Transverse colon (tissue), 4 donors: ENCODE measurements at regions of chr15 and their contacts with region 1.

Region 1: GRCh38 chr15:72199711-72200212 is 2.2 kb upstream of the GRAMD2A start:
- DNase-seq: peak; percentile 88
- H3K4me3 ChIP-seq: no peak overlapping the region
- H3K27ac ChIP-seq: peak overlapping the region in 3 of 4 donors; percentile 27 to 44 (median 43)
- H3K4me1 ChIP-seq: peaks cover 0 to 19% (median 5%) of the 10 kb centered on the region in 4 donors
- H3K27me3 ChIP-seq: peaks cover 31% of the 10 kb centered on the region
- CTCF ChIP-seq: peak; percentile 90 to 94 (median 91)
- EP300 ChIP-seq: no peak
- POLR2A ChIP-seq: no peak

Region 2: GRCh38 chr15:72086920-72087648 is 112.7 kb before region 1 on chr15:
- in situ Hi-C with region 1: no loop called
- intact Hi-C with region 1: no loop called
- DNase-seq: no peak
- H3K4me3 ChIP-seq: no peak overlapping the region
- H3K27ac ChIP-seq: no peak overlapping the region
- H3K4me1 ChIP-seq: peaks cover 0 to 5% (median 0%) of the 10 kb centered on the region in 4 donors
- H3K27me3 ChIP-seq: no peaks in the 10 kb centered on the region
- CTCF ChIP-seq: no peak
- EP300 ChIP-seq: no peak
- POLR2A ChIP-seq: no peak

Region 3: DNA sequence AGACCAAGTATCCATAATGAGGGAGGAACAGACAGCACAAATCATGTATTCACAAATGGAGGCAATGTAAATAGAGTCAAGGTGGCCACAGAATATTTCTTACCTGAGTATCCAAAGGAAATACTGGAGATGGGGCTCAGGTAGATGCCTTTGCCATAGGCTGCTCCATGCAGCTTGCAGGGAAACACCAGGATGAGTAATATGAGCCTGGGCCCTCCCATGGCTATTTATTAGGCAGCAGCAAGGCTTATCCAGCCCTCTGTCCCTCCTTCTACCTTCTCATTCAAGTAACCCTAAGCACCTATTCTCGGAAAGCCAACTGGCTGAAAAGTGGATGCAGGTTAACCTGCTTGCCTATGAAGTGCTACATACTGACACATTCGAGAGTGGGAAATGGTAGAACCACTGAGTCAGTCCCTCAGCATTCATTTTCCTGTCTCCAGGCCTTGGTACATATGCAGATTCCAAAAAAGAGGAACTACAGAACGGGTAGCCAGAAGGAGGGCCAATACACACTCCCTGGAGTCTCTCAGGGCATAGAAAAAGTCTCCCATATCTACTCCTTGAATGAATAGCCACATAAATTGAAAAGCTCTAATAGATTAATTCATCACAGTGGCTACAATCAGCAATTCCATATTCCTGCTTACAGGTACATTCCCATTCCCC is 49.5 kb after region 1 on chr15:
- in situ Hi-C with region 1: no loop called
- intact Hi-C with region 1: no loop called
- DNase-seq: no peak
- H3K4me3 ChIP-seq: no peak overlapping the region
- H3K27ac ChIP-seq: no peak overlapping the region
- H3K4me1 ChIP-seq: no peaks in the 10 kb centered on the region
- H3K27me3 ChIP-seq: no peaks in the 10 kb centered on the region
- CTCF ChIP-seq: no peak
- EP300 ChIP-seq: no peak
- POLR2A ChIP-seq: no peak

Region 4: GRCh38 chr15:72272213-72273002 is 72.6 kb after region 1 on chr15 and contains the start of gene PARP6:
- in situ Hi-C with region 1: loop called in 1 of 4 experiments (anchors 10 kb)
- intact Hi-C with region 1: no loop called
- DNase-seq: peak; percentile 98
- H3K4me3 ChIP-seq: peak within 1 kb of the TSS; percentile 76 to 95 (median 84)
- H3K27ac ChIP-seq: peak within 1 kb of the TSS; percentile 89 to 94 (median 92)
- H3K4me1 ChIP-seq: peaks cover 4 to 24% (median 10%) of the 10 kb centered on the region in 4 donors
- H3K27me3 ChIP-seq: no peaks in the 10 kb centered on the region
- CTCF ChIP-seq: peak; percentile 49 to 71 (median 59)
- EP300 ChIP-seq: no peak
- POLR2A ChIP-seq: peak; percentile 51
- total RNA-seq, gene PARP6: 44.1 to 152 (median 57.9) TPM

Region 5: DNA sequence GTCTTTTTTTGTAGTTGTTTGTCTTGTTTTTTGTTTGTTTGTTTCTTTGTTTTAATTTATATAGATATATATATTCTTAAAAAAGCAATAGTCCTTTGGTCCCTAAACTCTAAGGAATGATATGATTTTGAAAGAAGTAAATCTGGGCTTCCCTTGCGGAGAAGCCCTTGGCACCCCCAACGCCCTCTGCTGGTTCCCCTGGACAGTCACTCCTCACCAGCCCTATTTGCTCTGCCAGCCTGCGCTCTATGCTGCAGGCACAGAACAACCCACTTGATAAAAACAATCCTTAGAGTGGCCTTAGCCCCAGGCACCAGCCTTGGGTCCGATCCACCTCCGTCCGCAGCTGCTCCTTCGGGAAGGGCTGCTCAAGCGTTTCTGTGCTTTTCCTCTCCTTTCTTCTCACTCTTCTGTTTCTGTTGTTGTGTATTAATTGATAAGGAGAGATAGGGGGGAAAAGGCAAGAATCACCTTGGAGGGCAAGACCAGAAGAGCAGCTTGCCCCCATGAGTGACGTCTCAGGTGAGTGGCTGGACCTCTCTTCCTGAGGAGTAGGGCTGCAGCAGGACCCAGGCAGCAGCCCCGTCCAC is 86.3 kb after region 1 on chr15:
- in situ Hi-C with region 1: no loop called
- intact Hi-C with region 1: loop called (anchors 2 kb)
- DNase-seq: peak; percentile 48
- H3K4me3 ChIP-seq: no peak overlapping the region
- H3K27ac ChIP-seq: no peak overlapping the region
- H3K4me1 ChIP-seq: no peaks in the 10 kb centered on the region
- H3K27me3 ChIP-seq: no peaks in the 10 kb centered on the region
- CTCF ChIP-seq: peak; percentile 52 to 57 (median 54)
- EP300 ChIP-seq: no peak
- POLR2A ChIP-seq: no peak